Activated CD4-positive, alpha-beta memory T cell treated with anti-CD3 and anti-CD28 coated beads, Interleukin-2, amount 10 ng/mL, durations not matched to agents 7 days and 5 days (primary cell): ENCODE measurements at regions of chr12 and their contacts with region 1.

Region 1: GRCh38 chr12:121060149-121061001 is 21.3 kb upstream of the OASL start:
- DNase-seq: peak; percentile 79
- H3K4me3 Mint-ChIP-seq: peak overlapping the region; percentile 80
- H3K27ac Mint-ChIP-seq: peak overlapping the region; percentile 98
- H3K4me1 Mint-ChIP-seq: peaks cover 37% of the 10 kb centered on the region
- H3K27me3 Mint-ChIP-seq: no peaks in the 10 kb centered on the region

Region 2: GRCh38 chr12:120775862-120776552 is 284.4 kb before region 1 on chr12:
- CTCF ChIA-PET with region 1: no interaction called
- POLR2A ChIA-PET with region 1: no interaction called
- DNase-seq: no peak
- H3K4me3 Mint-ChIP-seq: no peak overlapping the region
- H3K27ac Mint-ChIP-seq: no peak overlapping the region
- H3K4me1 Mint-ChIP-seq: peaks cover 21% of the 10 kb centered on the region
- H3K27me3 Mint-ChIP-seq: no peaks in the 10 kb centered on the region

Region 3: GRCh38 chr12:121005346-121005815 is 55.0 kb before region 1 on chr12:
- CTCF ChIA-PET with region 1: interaction called, 47 read pairs
- POLR2A ChIA-PET with region 1: interaction called, 12 read pairs
- DNase-seq: peak; percentile 73
- H3K4me3 Mint-ChIP-seq: no peak overlapping the region
- H3K27ac Mint-ChIP-seq: peak overlapping the region; percentile 17
- H3K4me1 Mint-ChIP-seq: peaks cover 5% of the 10 kb centered on the region
- H3K27me3 Mint-ChIP-seq: no peaks in the 10 kb centered on the region

Region 4: DNA sequence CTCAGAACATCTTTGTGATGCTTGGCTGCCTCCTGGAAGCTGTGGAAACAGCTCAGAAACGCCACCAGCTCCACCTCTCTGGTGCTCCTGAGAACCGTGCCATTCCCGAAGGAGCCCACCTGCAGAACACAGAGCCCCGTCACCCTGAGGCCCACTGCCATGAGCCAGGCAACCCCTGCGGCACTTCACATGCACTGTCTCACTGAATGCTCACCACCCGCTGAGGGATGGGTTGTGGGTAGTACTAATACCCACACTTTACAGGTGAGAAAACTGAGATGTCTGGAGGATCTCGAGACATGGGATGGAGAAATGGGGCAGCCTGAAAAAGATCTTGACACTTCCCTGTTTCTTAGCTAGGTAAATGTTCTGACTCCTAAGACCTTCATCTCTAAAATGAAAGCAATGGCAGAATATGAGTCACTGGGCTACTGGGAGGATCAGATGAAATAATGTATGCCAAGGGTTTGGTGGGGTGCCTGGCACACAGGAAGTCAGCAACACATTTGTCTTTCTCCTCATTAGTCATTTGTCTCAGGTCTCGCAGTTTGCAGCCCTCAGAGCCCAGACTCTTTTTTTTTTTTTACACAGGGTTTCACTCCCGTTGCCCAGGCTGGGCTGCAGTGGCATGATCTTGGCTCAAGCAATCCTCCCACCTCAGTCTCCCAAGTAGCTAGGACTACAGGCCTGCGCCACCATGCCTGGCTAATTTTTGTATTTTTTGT is 26.6 kb before region 1 on chr12:
- CTCF ChIA-PET with region 1: interaction called, 42 read pairs
- POLR2A ChIA-PET with region 1: interaction called, 32 read pairs
- DNase-seq: peak; percentile 75
- H3K4me3 Mint-ChIP-seq: peak overlapping the region; percentile 99
- H3K27ac Mint-ChIP-seq: peak overlapping the region; percentile 90
- H3K4me1 Mint-ChIP-seq: peaks cover 59% of the 10 kb centered on the region
- H3K27me3 Mint-ChIP-seq: no peaks in the 10 kb centered on the region

Region 5: DNA sequence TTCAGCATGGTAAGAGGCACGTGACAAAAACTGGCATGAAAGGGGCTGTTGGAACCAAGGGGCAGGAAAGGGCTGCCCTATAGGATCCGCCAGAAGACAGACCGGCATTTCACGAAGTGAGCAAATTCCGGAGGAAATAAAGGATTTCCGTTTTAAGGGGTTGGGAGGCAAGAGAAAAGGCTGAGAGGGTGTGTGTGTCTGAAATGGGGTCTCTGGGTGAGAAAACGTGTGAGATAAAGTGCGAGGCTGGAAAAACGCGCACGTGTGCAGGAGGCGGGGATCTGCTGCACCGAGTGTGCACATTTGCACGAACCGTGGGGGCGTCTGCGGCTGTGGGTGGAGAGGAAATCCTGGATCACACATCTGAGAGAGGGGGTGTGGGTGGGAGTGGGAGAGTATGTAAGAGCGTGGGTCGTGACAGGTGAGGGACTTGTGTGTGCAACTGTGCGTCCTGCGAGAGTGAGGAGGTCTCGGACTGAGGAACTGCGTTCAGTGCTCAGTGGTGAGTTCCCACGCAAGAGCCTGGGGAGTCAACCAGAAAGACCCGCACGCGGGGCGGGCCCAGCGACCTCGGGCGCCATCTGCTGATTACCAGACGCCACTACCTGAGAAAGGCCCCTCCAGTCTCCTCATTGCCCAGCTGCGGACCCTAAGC is 35.3 kb after region 1 on chr12:
- CTCF ChIA-PET with region 1: interaction called, 27 read pairs
- POLR2A ChIA-PET with region 1: interaction called, 10 read pairs
- DNase-seq: peak; percentile 84
- H3K4me3 Mint-ChIP-seq: peak overlapping the region; percentile 71
- H3K27ac Mint-ChIP-seq: peak overlapping the region; percentile 28
- H3K4me1 Mint-ChIP-seq: peaks cover 40% of the 10 kb centered on the region
- H3K27me3 Mint-ChIP-seq: peaks cover 12% of the 10 kb centered on the region

Region 6: GRCh38 chr12:121223292-121224285 is 163.2 kb after region 1 on chr12:
- CTCF ChIA-PET with region 1: interaction called, 10 read pairs
- POLR2A ChIA-PET with region 1: interaction called, 5 read pairs
- DNase-seq: peak; percentile 83
- H3K4me3 Mint-ChIP-seq: peak overlapping the region; percentile 57
- H3K27ac Mint-ChIP-seq: peak overlapping the region; percentile 95
- H3K4me1 Mint-ChIP-seq: peaks cover 76% of the 10 kb centered on the region
- H3K27me3 Mint-ChIP-seq: no peaks in the 10 kb centered on the region

Region 7: DNA sequence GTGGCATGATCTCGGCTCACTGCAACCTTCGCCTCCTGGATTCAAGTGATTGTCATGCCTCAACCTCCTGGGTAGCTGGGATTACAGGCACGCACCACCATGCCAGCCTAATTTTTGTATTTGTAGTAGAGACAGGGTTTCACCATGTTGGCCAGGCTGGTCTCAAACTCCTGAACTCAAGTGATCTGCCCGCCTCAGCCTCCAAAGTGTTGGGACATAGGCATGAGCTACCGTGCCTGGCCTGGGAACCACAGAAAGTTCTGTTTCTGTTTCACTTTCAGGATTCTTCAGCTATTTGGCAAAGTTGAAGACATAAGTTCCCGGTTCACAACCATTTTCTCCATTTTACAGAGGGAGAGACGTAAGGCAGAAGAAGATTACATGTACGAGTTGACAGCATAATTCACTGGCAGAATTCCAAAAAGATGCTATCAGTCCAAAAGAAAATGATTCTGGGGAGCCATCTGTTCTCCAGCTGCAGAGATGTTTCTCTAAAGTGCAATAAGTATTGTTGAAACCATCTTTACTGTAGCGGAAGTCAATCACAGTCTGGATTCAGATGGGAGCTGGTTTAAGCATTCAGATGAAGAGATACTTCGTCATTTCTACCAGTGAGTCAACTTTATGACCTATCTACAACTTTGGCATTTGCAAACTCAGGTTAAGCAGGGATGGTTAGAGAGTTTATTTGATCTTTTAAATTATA is 331.4 kb after region 1 on chr12:
- CTCF ChIA-PET with region 1: no interaction called
- POLR2A ChIA-PET with region 1: no interaction called
- DNase-seq: peak; percentile 58
- H3K4me3 Mint-ChIP-seq: peak overlapping the region; percentile 48
- H3K27ac Mint-ChIP-seq: peak overlapping the region; percentile 74
- H3K4me1 Mint-ChIP-seq: peaks cover 18% of the 10 kb centered on the region
- H3K27me3 Mint-ChIP-seq: no peaks in the 10 kb centered on the region